ENCODE measurements at regions of chr12 and their contacts with region 1.

Region 1: GRCh38 chr12:108553799-108554198 is 7.2 kb downstream of the SART3 start:
- DNase-seq: no peak
- ATAC-seq: no peak
- H3K4me3 ChIP-seq: no peak overlapping the region
- H3K4me3 Mint-ChIP-seq: peak overlapping the region in 8 of 10 donors; percentile 2 to 98 (median 51)
- H3K27ac ChIP-seq: no peak overlapping the region
- H3K27ac Mint-ChIP-seq: peak overlapping the region in 2 of 9 donors; percentile 41 to 65
- H3K4me1 ChIP-seq: peaks cover 16 to 46% of the 10 kb centered on the region in 2 donors
- H3K4me1 Mint-ChIP-seq: peaks cover 58 to 94% (median 85%) of the 10 kb centered on the region in 7 donors
- H3K27me3 ChIP-seq: no peaks in the 10 kb centered on the region
- H3K27me3 Mint-ChIP-seq: no peaks in the 10 kb centered on the region

Region 2: DNA sequence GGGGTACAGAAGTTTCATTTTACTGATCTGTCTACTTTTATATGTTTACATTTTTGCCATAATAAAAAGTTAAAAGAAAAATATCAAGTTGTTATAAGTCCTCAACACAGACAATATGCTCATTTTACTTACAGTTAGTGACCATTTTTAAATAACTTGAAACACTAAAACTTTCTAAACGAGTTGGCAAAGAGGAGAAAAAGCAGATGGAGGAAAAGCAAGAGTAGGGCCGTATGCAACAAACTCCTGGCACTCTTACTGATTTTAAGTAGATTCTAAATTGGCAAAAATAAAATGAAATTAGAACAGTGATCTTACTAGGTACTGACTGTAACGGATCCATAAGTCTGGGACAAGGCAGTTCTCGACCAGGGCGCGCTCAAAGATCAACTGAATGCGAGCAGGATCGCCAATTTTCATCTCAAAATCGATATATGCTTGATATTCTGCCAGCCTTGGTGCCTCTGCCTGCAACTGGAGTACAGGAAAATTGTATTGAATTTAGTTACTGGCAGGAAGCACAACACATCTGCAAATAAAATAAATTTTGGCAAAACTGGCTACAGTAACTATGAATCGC is 15.1 kb before region 1 on chr12:
- CTCF ChIA-PET with region 1: no interaction called
- POLR2A ChIA-PET with region 1: interaction called, 7 read pairs
- intact Hi-C with region 1: loop called in 1 of 2 experiments (anchors 2 kb)
- DNase-seq: no peak
- ATAC-seq: no peak
- H3K4me3 ChIP-seq: no peak overlapping the region
- H3K4me3 Mint-ChIP-seq: no peak overlapping the region
- H3K27ac ChIP-seq: no peak overlapping the region
- H3K27ac Mint-ChIP-seq: peak overlapping the region in 2 of 9 donors; percentile 20 to 30
- H3K4me1 ChIP-seq: no peaks in the 10 kb centered on the region
- H3K4me1 Mint-ChIP-seq: peaks cover 6 to 25% (median 16%) of the 10 kb centered on the region in 7 donors
- H3K27me3 ChIP-seq: no peaks in the 10 kb centered on the region
- H3K27me3 Mint-ChIP-seq: no peaks in the 10 kb centered on the region